ENCODE measurements at regions of chr7 and their contacts with region 1.

Region 1: DNA sequence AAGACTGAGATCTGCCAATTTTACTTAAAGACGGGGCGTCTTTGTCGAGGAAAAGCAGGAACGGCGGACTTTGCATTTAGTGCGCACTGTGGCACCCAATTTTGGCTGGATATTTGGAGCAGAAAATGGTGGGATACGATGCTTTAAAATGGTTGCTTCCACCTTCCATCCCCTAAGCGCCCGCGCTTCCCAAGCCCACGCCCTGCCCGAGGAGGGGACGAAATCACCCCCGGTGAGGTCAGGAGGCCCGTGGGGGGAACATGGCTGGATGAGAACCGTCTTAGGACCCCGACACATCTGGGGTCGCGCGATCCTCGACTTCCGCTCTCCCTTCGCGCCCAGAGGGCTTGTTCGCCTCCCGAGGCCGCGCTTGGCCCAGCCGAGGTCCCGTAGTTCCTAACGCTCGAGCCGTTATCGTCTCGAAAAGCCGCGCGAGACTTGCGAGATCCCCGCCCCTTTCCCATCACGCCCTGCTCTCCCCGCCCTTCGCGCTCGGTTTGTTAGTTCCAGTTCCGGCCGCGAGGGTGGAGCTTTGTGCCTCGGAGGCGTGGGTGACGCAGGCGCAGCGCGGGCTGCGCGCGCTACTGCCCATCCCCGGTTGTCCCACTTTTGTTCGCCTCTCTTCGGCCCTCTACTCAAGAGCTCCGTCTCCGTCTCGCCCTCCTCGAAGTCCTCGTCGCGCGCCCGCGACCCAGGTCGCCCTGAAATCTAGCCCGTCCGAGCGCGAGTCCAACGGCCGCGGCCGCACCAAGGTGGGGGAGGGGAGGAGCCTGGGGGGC is at the start of gene SRRT:
- DNase-seq: peak; percentile 97 to 100 (median 99)

Region 2: GRCh38 chr7:100837099-100837836 is 37.5 kb before region 1 on chr7:
- intact Hi-C with region 1: loop called (anchors 5 kb)
- DNase-seq: peak; percentile 85 to 98 (median 94)

Measured in head of caudate nucleus (tissue), 42 donors.